ENCODE measurements at regions of chr1 and their contacts with region 1.

Region 1: GRCh38 chr1:101309334-101310311 is 72.8 kb downstream of the S1PR1 start:
- DNase-seq: peak; percentile 80
- ATAC-seq: peak; percentile 72
- H3K4me3 Mint-ChIP-seq: peak overlapping the region; percentile 73
- H3K27ac Mint-ChIP-seq: peak overlapping the region; percentile 90
- H3K4me1 Mint-ChIP-seq: peaks cover 51% of the 10 kb centered on the region
- H3K27me3 Mint-ChIP-seq: peaks cover 16% of the 10 kb centered on the region

Region 2: GRCh38 chr1:100895540-100896483 is 413.8 kb before region 1 on chr1 and contains the start of gene SLC30A7:
- CTCF ChIA-PET with region 1: interaction called, 11 read pairs
- DNase-seq: peak; percentile 95
- ATAC-seq: peak; percentile 86
- H3K4me3 Mint-ChIP-seq: peak within 1 kb of the TSS; percentile 94
- H3K27ac Mint-ChIP-seq: peak within 1 kb of the TSS; percentile 93
- H3K4me1 Mint-ChIP-seq: peaks cover 44% of the 10 kb centered on the region
- H3K27me3 Mint-ChIP-seq: no peaks in the 10 kb centered on the region
- total RNA-seq, gene SLC30A7: 29.1 to 33.3 TPM

Region 3: GRCh38 chr1:101298663-101299062 is 11.0 kb before region 1 on chr1:
- CTCF ChIA-PET with region 1: interaction called, 87 read pairs
- DNase-seq: no peak
- ATAC-seq: no peak
- H3K4me3 Mint-ChIP-seq: no peak overlapping the region
- H3K27ac Mint-ChIP-seq: no peak overlapping the region
- H3K4me1 Mint-ChIP-seq: peaks cover 5% of the 10 kb centered on the region
- H3K27me3 Mint-ChIP-seq: peaks cover 51% of the 10 kb centered on the region

Region 4: GRCh38 chr1:101344745-101345144 is 35.1 kb after region 1 on chr1:
- CTCF ChIA-PET with region 1: interaction called, 18 read pairs
- DNase-seq: no peak
- ATAC-seq: no peak
- H3K4me3 Mint-ChIP-seq: no peak overlapping the region
- H3K27ac Mint-ChIP-seq: no peak overlapping the region
- H3K4me1 Mint-ChIP-seq: peaks cover 37% of the 10 kb centered on the region
- H3K27me3 Mint-ChIP-seq: peaks cover 2% of the 10 kb centered on the region

Region 5: GRCh38 chr1:101364370-101365120 is 54.9 kb after region 1 on chr1:
- CTCF ChIA-PET with region 1: interaction called, 139 read pairs
- DNase-seq: no peak
- ATAC-seq: no peak
- H3K4me3 Mint-ChIP-seq: no peak overlapping the region
- H3K27ac Mint-ChIP-seq: no peak overlapping the region
- H3K4me1 Mint-ChIP-seq: no peaks in the 10 kb centered on the region
- H3K27me3 Mint-ChIP-seq: peaks cover 3% of the 10 kb centered on the region

Region 6: DNA sequence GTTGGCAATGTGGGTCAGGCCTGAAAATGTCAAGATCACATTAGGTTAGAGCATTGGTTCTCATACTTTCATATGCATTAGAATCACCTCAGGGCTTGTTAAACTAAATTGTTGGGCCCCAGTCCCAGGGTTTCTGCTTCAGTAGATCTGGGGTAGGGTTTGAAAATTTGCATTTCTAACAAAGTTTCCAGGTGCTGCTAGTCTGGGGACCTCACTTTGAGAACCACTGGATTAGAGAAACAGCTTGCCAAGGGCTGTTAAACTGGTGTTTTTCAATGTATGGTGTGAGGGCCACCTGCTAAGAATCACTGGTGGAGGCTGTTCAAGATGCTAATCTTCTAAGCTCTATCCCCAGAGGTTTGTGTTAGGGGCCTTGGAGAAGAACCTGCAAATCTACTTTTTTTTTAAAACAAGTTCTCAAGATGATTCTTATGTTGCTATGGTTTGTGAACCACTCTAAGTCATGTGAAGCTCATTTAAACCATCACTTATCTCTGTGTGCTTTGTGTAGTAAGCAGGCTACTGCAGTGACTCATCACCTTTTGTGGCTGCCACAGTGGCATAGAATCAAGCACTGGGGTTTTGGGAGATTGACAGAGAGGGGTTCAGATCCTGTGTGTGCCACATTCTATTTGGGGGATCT is 79.4 kb after region 1 on chr1:
- CTCF ChIA-PET with region 1: no interaction called
- DNase-seq: peak; percentile 79
- ATAC-seq: peak; percentile 97
- H3K4me3 Mint-ChIP-seq: no peak overlapping the region
- H3K27ac Mint-ChIP-seq: no peak overlapping the region
- H3K4me1 Mint-ChIP-seq: peaks cover 20% of the 10 kb centered on the region
- H3K27me3 Mint-ChIP-seq: peaks cover 6% of the 10 kb centered on the region

Region 7: GRCh38 chr1:101399222-101399621 is 89.6 kb after region 1 on chr1:
- CTCF ChIA-PET with region 1: no interaction called
- DNase-seq: no peak
- ATAC-seq: no peak
- H3K4me3 Mint-ChIP-seq: no peak overlapping the region
- H3K27ac Mint-ChIP-seq: no peak overlapping the region
- H3K4me1 Mint-ChIP-seq: no peaks in the 10 kb centered on the region
- H3K27me3 Mint-ChIP-seq: peaks cover 37% of the 10 kb centered on the region

Region 8: DNA sequence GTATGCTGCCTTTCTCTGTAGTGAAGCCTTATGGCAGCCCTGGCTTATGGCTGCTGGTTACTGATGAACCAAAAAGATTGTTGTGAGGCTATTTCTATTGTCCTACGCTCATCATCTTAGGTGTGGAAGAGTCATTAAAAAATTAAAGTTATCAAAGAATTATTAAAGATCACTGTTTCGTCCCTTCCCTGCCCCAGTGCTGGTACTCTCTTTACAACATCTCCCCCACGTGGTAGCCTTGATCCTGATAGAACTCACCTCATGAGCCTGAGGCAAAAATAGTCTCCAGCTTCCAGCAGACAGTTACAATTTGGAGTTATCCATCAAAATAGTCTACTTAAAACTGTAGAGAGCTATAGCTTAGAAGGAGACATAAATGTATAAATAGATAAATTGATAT is 128.7 kb after region 1 on chr1:
- CTCF ChIA-PET with region 1: interaction called, 16 read pairs
- DNase-seq: no peak
- ATAC-seq: no peak
- H3K4me3 Mint-ChIP-seq: no peak overlapping the region
- H3K27ac Mint-ChIP-seq: no peak overlapping the region
- H3K4me1 Mint-ChIP-seq: no peaks in the 10 kb centered on the region
- H3K27me3 Mint-ChIP-seq: peaks cover 38% of the 10 kb centered on the region